Activated CD4-positive, alpha-beta T cell treated with anti-CD3 and anti-CD28 coated beads, Interleukin-2, amount 10 ng/mL, durations not matched to agents 24 days and 14 days (primary cell): ENCODE measurements at regions of chr7 and their contacts with region 1.

Region 1: GRCh38 chr7:134865001-134865845 is 85.8 kb downstream of the CALD1 start:
- DNase-seq: peak; percentile 81
- H3K4me3 Mint-ChIP-seq: peak overlapping the region; percentile 77
- H3K27ac Mint-ChIP-seq: peak overlapping the region; percentile 86
- H3K4me1 Mint-ChIP-seq: peaks cover 19% of the 10 kb centered on the region
- H3K27me3 Mint-ChIP-seq: no peaks in the 10 kb centered on the region

Region 2: DNA sequence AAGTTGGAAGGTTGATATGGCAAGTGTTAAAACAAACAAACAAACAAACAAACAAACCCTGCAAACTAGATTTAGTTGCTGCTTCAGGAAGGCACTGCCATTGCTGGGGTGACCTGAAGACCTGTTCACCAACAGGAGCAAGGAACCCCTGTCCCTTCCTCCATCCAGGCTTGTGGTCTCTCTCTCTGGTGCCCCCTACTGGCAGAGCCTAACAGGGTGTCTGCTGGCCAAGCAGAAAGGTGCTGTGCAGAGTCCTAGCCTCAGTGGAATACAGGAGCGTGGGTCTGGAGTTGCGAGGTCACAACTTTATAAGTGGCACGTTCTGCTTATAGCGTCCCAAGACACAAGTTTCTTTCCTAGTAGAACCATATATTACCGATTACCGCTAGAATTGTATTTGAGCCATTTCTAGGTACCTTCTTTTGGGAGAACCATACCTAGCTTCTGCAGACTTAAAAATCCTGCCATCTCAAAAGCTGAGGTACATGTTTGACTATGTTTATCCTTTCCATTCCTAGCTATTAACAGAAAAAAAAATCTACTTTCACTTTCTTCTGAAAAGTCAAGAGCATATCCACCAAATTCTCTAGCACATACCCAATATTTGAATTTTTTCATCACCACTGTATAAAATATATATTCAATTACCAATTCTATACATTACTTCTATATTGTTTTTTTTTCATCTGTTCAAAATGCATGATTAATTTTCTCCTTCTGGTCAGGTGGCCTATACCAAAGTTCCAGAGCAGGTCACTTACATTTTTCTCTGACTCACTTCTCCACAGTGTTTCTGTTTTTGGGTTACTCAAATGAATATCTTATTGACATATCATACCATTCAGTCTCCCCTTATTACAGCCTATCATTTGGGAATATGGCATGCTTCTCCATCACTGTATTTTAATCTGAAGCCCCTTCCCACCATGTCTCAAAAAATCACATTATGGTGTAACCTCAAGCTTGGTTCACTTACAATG is 114.8 kb before region 1 on chr7:
- intact Hi-C with region 1: loop called (anchors 5 kb)
- DNase-seq: peak; percentile 85
- H3K4me3 Mint-ChIP-seq: no peak overlapping the region
- H3K27ac Mint-ChIP-seq: peak overlapping the region; percentile 74
- H3K4me1 Mint-ChIP-seq: peaks cover 8% of the 10 kb centered on the region
- H3K27me3 Mint-ChIP-seq: peaks cover 1% of the 10 kb centered on the region

Region 3: GRCh38 chr7:134811765-134812164 is 53.5 kb before region 1 on chr7:
- intact Hi-C with region 1: no loop called
- DNase-seq: no peak
- H3K4me3 Mint-ChIP-seq: no peak overlapping the region
- H3K27ac Mint-ChIP-seq: no peak overlapping the region
- H3K4me1 Mint-ChIP-seq: no peaks in the 10 kb centered on the region
- H3K27me3 Mint-ChIP-seq: no peaks in the 10 kb centered on the region

Region 4: GRCh38 chr7:134905375-134905774 is 40.2 kb after region 1 on chr7:
- intact Hi-C with region 1: loop called (anchors 5 kb)
- DNase-seq: no peak
- H3K4me3 Mint-ChIP-seq: no peak overlapping the region
- H3K27ac Mint-ChIP-seq: no peak overlapping the region
- H3K4me1 Mint-ChIP-seq: peaks cover 16% of the 10 kb centered on the region
- H3K27me3 Mint-ChIP-seq: no peaks in the 10 kb centered on the region

Region 5: GRCh38 chr7:134920026-134920753 is 55.0 kb after region 1 on chr7:
- intact Hi-C with region 1: loop called (anchors 2 kb)
- DNase-seq: no peak
- H3K4me3 Mint-ChIP-seq: peak overlapping the region; percentile 16
- H3K27ac Mint-ChIP-seq: peak overlapping the region; percentile 34
- H3K4me1 Mint-ChIP-seq: peaks cover 13% of the 10 kb centered on the region
- H3K27me3 Mint-ChIP-seq: no peaks in the 10 kb centered on the region

Region 6: DNA sequence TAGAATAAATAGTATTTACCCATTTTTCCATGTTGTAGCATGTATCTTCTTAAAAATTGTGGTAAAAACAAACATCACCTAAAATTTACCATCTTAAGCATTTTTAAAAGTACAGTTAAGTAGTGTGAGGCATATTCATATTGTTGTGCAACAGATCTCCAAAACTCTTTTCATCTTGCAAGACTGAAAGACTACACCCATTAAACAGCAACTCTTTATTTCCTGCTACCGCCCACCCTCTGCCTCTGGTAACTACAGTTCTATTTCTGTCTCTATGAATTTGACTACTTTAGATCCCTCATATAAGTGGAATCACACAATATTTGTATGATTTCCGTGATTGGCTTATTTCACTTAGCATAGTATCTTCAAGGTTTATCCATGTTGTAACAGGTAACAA is 81.0 kb after region 1 on chr7:
- intact Hi-C with region 1: loop called (anchors 5 kb)
- DNase-seq: no peak
- H3K4me3 Mint-ChIP-seq: no peak overlapping the region
- H3K27ac Mint-ChIP-seq: no peak overlapping the region
- H3K4me1 Mint-ChIP-seq: peaks cover 7% of the 10 kb centered on the region
- H3K27me3 Mint-ChIP-seq: peaks cover 2% of the 10 kb centered on the region

Region 7: GRCh38 chr7:135147899-135148721 is 282.9 kb after region 1 on chr7 and contains the start of gene TMEM140:
- intact Hi-C with region 1: loop called (anchors 2 kb)
- DNase-seq: peak; percentile 92
- H3K4me3 Mint-ChIP-seq: peak within 1 kb of the TSS; percentile 91
- H3K27ac Mint-ChIP-seq: peak within 1 kb of the TSS; percentile 95
- H3K4me1 Mint-ChIP-seq: peaks cover 54% of the 10 kb centered on the region
- H3K27me3 Mint-ChIP-seq: no peaks in the 10 kb centered on the region
- total RNA-seq, gene TMEM140: 2.2 TPM in 2 replicates